GM13976 (cell line): ENCODE measurements at regions of chr16 and their contacts with region 1.

Region 1: DNA sequence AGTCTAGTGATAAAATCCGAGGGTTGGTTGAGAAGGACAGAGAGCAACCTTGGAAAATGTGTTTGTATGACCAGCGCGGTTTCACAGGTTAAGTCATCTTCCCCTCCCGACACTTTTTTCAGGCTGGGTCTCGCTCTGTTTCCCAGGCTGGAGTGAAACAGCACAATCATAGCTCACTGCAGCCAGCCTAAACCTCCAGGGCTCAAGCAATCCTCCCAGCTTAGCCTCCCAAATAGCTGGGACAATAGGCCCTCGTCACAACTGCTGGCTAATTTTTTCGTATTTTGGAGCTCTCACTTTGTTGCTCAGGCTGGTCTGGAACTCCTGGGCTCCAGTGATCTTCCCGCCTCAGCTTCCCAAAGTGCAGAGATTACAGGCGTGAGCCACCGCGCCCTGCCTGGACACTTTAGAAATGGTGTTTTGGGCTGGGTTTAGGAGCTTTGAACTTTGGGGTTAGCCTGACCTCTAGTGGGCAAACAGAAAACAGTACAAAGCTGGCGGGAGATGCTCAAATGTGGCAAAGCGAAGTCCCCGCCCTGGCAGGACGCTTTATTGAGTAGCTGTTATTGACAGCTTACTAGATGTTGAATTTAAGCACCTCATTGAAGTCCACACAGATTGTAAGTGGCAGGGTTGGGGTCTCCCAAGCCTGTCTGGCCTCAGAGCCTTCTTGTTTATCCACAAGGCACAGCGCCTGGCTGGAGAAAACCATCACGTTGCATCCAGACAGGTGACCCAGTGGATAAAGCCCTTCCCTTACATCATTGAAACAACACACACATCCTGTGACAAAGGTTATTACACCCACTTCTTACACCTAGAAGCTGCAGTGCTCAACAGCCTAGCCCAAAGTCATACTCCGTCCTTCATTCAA is 34.7 kb upstream of the RBBP6 start:
- DNase-seq: peak; percentile 68
- CTCF ChIP-seq: peak; percentile 72

Region 2: DNA sequence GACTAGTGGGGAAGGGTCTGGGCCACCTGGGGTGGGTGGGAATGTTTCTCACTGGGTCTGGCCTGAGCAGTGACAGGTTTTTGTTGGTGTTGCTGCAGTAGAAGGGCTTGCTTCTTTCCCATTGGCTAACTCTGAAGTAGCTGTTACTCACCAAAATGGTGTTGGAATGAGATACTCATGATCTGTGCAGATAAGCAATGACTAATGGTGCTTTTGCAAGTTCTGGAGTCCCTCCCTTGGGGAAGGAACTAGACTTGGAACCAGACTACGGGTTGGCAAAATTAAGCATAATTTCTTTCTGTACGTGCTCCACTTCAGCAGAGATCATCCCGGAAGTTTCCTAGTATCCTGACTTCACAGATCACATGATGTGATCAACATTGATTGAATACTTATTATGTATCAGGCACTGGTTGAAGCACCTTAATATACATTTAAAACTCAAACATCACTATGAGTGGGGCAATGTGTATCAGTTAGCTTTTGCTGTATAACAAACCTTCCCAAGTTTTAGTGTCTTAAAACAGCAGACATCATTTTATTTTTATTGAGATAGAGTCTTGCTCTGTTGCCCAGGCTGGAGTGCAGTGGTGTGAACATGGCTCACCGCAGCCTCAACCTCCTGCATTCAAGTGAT is 719.8 kb before region 1 on chr16:
- in situ Hi-C with region 1: loop called (anchors 25 kb)
- DNase-seq: no peak
- CTCF ChIP-seq: no peak

Region 3: GRCh38 chr16:24769806-24770205 is 265.1 kb after region 1 on chr16:
- in situ Hi-C with region 1: no loop called
- DNase-seq: no peak
- CTCF ChIP-seq: no peak